Activated T-helper 2 cell treated with anti-CD3 and anti-CD28 coated beads, Interferon-gamma antibody, Interleukin-2, Interleukin-4, amounts not matched to agents 10 μg/mL and 5 μg/mL and 100 μg/mL, durations not matched to agents 14 hours and 24 hours and 36 hours (primary cell): ENCODE measurements at regions of chr3 and their contacts with region 1.

Region 1: GRCh38 chr3:43286115-43286840 is at the start of gene SNRK:
- DNase-seq: peak; percentile 88
- H3K4me3 Mint-ChIP-seq: peak within 1 kb of the TSS; percentile 89
- H3K27ac Mint-ChIP-seq: peak within 1 kb of the TSS; percentile 82
- H3K4me1 Mint-ChIP-seq: peaks cover 33% of the 10 kb centered on the region
- H3K27me3 Mint-ChIP-seq: peaks cover 10% of the 10 kb centered on the region
- total RNA-seq, gene SNRK: 28.0 and 28.7 TPM in 2 replicates

Region 2: DNA sequence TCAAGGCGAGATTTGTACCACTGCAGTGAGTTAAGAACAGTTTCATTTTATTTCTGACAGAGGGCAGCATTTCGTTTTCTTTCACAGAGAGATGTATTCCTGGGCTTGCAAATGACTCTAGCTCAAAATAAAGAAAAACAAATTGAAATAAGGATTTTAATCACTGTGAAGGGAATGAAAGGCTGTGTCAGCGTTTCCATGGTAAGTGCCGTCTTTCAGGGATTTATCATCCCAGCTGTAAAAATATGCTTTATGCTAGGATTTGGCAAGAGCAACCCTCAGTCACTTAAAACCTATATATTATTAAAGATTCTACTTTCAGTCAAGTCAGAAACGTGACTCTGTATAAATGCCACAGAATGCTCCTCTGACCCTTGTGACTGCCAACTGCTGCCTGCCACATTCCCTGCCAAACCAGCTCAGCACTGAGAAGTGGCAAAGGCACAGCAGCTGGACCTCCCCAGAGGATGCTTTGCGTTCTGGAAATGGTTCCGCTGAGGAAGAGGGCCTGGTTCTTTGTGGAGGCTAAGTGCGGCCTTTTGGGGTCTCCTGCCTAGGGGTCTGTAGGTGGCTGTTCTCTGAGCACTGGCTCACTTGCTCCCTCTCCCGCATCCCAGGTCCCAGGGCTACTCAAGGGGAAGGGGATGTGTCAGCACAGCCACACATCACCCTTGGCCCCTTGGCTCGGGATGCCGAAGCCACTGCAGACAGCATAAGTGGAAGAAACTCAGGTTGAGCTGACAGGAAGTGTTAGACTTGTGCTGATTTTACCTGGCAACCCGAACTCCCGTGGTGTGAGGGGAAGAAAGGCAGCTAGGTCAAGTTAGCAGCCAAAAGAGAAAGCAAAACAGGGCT is 123.8 kb before region 1 on chr3:
- intact Hi-C with region 1: loop called (anchors 1 kb)
- DNase-seq: peak; percentile 36
- H3K4me3 Mint-ChIP-seq: peak overlapping the region; percentile 21
- H3K27ac Mint-ChIP-seq: peak overlapping the region; percentile 73
- H3K4me1 Mint-ChIP-seq: peaks cover 15% of the 10 kb centered on the region
- H3K27me3 Mint-ChIP-seq: peaks cover 4% of the 10 kb centered on the region

Region 3: GRCh38 chr3:43302116-43302880 is 16.0 kb after region 1 on chr3:
- intact Hi-C with region 1: loop called (anchors 2 kb)
- DNase-seq: no peak
- H3K4me3 Mint-ChIP-seq: peak overlapping the region; percentile 18
- H3K27ac Mint-ChIP-seq: no peak overlapping the region
- H3K4me1 Mint-ChIP-seq: peaks cover 59% of the 10 kb centered on the region
- H3K27me3 Mint-ChIP-seq: no peaks in the 10 kb centered on the region

Region 4: DNA sequence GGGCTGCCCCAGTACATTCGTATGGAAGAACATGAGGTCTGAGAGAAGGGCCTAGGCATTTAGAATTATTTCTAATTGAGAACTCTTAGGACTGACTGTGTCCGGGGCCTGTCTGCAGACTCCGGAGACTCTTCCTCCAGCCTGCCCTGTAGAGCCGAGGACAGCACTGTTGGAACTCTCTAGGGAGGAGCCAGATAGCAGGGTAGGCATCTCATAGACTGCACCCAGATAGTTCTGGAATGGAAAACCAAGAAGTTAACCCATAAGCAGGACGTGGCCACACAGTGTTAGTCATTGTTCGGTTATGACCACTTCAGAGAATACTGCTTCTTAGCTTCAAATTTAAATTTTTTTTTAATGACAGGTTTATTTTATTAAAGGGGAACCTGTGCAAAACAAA is 59.6 kb after region 1 on chr3:
- intact Hi-C with region 1: loop called (anchors 1 kb)
- DNase-seq: no peak
- H3K4me3 Mint-ChIP-seq: peak overlapping the region; percentile 20
- H3K27ac Mint-ChIP-seq: peak overlapping the region; percentile 85
- H3K4me1 Mint-ChIP-seq: peaks cover 56% of the 10 kb centered on the region
- H3K27me3 Mint-ChIP-seq: no peaks in the 10 kb centered on the region

Region 5: DNA sequence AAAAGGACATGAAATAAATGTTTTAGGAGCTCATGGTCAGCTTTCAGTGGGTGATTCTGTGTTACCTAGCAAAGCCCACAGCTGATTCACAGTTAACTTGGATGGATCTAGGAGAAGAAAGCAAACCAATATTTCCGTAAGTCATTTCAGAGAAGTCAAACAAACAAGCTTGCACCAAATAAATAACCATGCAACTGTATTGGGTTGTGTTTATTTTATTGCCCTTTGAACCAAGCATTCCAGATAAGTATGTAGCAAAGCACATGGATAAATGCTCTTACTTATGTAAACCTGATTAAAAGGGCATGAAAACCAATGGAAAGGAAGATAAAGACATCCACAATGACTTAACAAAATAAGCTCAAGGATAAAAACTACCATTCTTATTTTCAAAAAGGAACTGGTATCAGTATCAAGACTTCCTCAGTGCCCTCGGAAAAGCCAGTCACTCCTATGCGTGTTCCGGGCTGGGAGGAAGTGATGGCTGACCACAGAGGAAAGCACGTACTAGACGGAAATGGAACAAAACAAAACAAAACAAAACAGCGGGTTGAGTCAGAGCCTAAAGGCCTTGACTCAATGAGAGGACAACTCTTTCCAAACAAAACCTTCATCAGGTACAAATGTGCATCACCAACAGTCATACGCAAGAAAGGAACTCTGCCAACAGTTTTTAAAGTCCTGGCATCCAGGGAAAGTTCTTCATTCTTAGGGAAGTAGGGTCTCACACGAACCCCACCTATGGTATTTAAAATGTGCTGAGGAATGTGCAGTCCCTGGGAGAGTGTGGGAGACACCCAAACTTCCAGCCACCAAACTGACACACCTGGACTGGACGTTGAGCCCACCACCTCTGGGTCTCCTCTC is 103.3 kb after region 1 on chr3:
- intact Hi-C with region 1: loop called (anchors 2 kb)
- DNase-seq: peak; percentile 77
- H3K4me3 Mint-ChIP-seq: no peak overlapping the region
- H3K27ac Mint-ChIP-seq: peak overlapping the region; percentile 71
- H3K4me1 Mint-ChIP-seq: peaks cover 35% of the 10 kb centered on the region
- H3K27me3 Mint-ChIP-seq: peaks cover 15% of the 10 kb centered on the region

Region 6: GRCh38 chr3:43690400-43691119 is 404.3 kb after region 1 on chr3 and contains the start of gene ABHD5:
- intact Hi-C with region 1: no loop called
- DNase-seq: peak; percentile 91
- H3K4me3 Mint-ChIP-seq: peak within 1 kb of the TSS; percentile 85
- H3K27ac Mint-ChIP-seq: peak within 1 kb of the TSS; percentile 82
- H3K4me1 Mint-ChIP-seq: peaks cover 23% of the 10 kb centered on the region
- H3K27me3 Mint-ChIP-seq: peaks cover 8% of the 10 kb centered on the region
- total RNA-seq, gene ABHD5: 11.9 and 15.2 TPM in 2 replicates